Naive thymus-derived CD4-positive, alpha-beta T cell (primary cell): ENCODE measurements at regions of chr4 and their contacts with region 1.

Region 1: GRCh38 chr4:107736924-107737448 is 17.0 kb upstream of the PAPSS1 start:
- DNase-seq: peak in 7 of 9 donors; percentile 14 to 45 (median 33)
- ATAC-seq: peak; percentile 74
- H3K4me3 ChIP-seq: no peak overlapping the region
- H3K4me3 Mint-ChIP-seq: no peak overlapping the region
- H3K27ac ChIP-seq: no peak overlapping the region
- H3K27ac Mint-ChIP-seq: no peak overlapping the region
- H3K4me1 ChIP-seq: no peaks in the 10 kb centered on the region
- H3K4me1 Mint-ChIP-seq: no peaks in the 10 kb centered on the region
- H3K27me3 ChIP-seq: no peaks in the 10 kb centered on the region
- H3K27me3 Mint-ChIP-seq: peaks cover 0 to 6% (median 0%) of the 10 kb centered on the region in 5 donors

Region 2: DNA sequence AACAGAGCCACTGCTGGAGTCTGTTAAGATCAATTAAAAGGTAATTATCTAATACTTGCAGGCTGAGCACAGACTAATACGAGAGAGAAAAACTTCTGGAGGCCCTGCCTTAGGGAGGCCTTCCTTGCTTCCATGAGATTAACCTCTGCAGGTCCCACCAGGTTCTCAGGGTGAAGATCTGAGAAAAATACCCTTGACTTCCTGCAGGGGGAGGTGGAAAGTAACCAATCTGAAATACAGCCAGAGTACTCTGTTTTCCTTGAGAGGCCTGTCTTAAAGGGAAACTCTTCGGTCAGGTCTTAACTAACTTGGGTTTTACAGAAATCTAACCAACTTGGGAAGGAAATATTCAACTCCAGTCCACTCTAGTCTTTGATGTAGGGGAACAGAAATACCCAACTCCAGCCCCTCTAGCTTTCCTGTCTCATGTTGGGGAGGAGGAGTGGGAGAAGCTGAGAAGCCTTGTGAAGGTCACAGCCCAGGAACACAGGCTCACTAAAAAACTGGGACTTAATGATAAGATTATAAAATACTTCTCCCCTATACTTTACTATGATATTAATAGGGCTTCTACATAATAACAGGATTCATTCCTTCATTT is 1498.1 kb before region 1 on chr4:
- CTCF ChIA-PET with region 1: no interaction called
- POLR2A ChIA-PET with region 1: no interaction called
- intact Hi-C with region 1: loop called in 1 of 2 experiments (anchors 1 kb)
- DNase-seq: peak in 3 of 9 donors; percentile 1 to 16 (median 5)
- ATAC-seq: peak; percentile 51
- H3K4me3 ChIP-seq: no peak overlapping the region
- H3K4me3 Mint-ChIP-seq: no peak overlapping the region
- H3K27ac ChIP-seq: no peak overlapping the region
- H3K27ac Mint-ChIP-seq: no peak overlapping the region
- H3K4me1 ChIP-seq: no peaks in the 10 kb centered on the region
- H3K4me1 Mint-ChIP-seq: no peaks in the 10 kb centered on the region
- H3K27me3 ChIP-seq: no peaks in the 10 kb centered on the region
- H3K27me3 Mint-ChIP-seq: no peaks in the 10 kb centered on the region

Region 3: GRCh38 chr4:106266201-106266600 is 1470.8 kb before region 1 on chr4:
- CTCF ChIA-PET with region 1: no interaction called
- POLR2A ChIA-PET with region 1: no interaction called
- intact Hi-C with region 1: loop called in 1 of 2 experiments (anchors 2 kb)
- DNase-seq: peak in 4 of 9 donors; percentile 1 to 15 (median 8)
- ATAC-seq: no peak
- H3K4me3 ChIP-seq: no peak overlapping the region
- H3K4me3 Mint-ChIP-seq: no peak overlapping the region
- H3K27ac ChIP-seq: no peak overlapping the region
- H3K27ac Mint-ChIP-seq: no peak overlapping the region
- H3K4me1 ChIP-seq: no peaks in the 10 kb centered on the region
- H3K4me1 Mint-ChIP-seq: peaks cover 0 to 12% (median 0%) of the 10 kb centered on the region in 7 donors
- H3K27me3 ChIP-seq: no peaks in the 10 kb centered on the region
- H3K27me3 Mint-ChIP-seq: no peaks in the 10 kb centered on the region

Region 4: GRCh38 chr4:106329041-106329618 is 1407.9 kb before region 1 on chr4:
- CTCF ChIA-PET with region 1: no interaction called
- POLR2A ChIA-PET with region 1: no interaction called
- intact Hi-C with region 1: loop called in 1 of 2 experiments (anchors 5 kb)
- DNase-seq: peak in 3 of 9 donors; percentile 7 to 19 (median 18)
- ATAC-seq: peak; percentile 77
- H3K4me3 ChIP-seq: no peak overlapping the region
- H3K4me3 Mint-ChIP-seq: no peak overlapping the region
- H3K27ac ChIP-seq: no peak overlapping the region
- H3K27ac Mint-ChIP-seq: peak overlapping the region in 1 of 9 donors; percentile 52
- H3K4me1 ChIP-seq: no peaks in the 10 kb centered on the region
- H3K4me1 Mint-ChIP-seq: peaks cover 0 to 24% (median 13%) of the 10 kb centered on the region in 7 donors
- H3K27me3 ChIP-seq: no peaks in the 10 kb centered on the region
- H3K27me3 Mint-ChIP-seq: no peaks in the 10 kb centered on the region

Region 5: DNA sequence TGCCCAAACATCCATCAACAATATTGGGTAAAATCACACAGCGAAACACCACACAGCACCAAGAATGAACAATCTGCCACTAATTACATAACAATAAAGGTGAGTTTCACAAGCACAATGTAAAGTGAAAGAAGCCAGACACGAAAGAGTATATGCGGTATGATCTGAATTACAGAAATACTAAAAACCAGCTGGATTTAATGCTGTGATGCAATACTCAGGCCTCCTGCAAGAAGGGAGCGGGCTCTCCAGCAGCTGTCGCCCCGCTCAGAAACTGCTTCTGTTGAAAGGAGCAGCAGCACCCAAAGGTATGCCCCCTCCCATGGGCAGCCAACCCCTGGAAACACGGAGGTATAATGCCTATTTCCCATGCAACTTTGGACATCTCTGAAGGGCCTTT is 94.0 kb before region 1 on chr4:
- CTCF ChIA-PET with region 1: no interaction called
- POLR2A ChIA-PET with region 1: no interaction called
- intact Hi-C with region 1: loop called in 1 of 2 experiments (anchors 5 kb)
- DNase-seq: no peak
- ATAC-seq: no peak
- H3K4me3 ChIP-seq: no peak overlapping the region
- H3K4me3 Mint-ChIP-seq: no peak overlapping the region
- H3K27ac ChIP-seq: no peak overlapping the region
- H3K27ac Mint-ChIP-seq: no peak overlapping the region
- H3K4me1 ChIP-seq: no peaks in the 10 kb centered on the region
- H3K4me1 Mint-ChIP-seq: peaks cover 0 to 5% (median 0%) of the 10 kb centered on the region in 7 donors
- H3K27me3 ChIP-seq: no peaks in the 10 kb centered on the region
- H3K27me3 Mint-ChIP-seq: no peaks in the 10 kb centered on the region

Region 6: DNA sequence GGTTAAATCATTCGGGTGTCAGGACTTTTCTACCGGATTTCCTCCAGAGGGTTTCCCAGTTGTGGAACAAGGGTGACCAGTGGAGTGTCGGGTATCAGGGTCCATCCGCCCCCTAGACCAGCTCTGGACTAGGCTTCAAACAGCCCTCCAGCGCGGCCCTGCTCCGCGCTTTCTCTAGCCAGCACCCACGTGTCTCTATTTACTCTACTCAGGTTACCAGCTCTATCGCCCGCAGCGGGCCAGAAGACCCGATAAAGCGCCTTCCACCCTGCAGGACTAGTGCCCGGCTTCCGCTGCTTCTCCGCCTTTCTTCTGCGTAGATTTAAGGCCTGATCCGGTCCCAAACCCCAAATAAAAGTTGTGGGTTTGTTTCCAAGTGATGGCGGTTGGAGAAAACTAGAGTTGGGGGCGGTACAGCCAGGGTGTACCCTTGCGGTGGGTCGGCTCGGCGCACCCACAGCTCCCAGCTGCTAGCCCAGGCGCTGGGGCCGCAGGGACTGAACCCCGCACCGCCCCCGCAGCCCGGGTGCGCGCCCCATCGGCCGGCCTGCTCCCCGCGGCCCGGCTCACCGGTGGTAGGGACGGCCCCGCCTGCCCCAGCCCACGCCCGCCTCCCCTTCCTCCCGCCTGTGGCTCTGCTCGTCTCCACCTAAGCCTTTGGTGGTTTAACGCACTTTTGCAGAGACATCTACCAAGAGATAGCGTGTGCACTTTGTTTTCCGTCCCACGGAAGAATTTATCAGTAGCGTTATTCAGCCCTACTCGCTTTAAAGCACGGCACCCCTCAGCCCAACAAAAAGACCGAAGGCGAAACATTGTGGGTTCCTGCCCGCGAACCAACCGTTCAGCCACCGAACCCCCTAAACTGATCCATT is 429.7 kb after region 1 on chr4:
- CTCF ChIA-PET with region 1: no interaction called
- POLR2A ChIA-PET with region 1: no interaction called
- intact Hi-C with region 1: no loop called
- DNase-seq: peak; percentile 38 to 89 (median 70)
- ATAC-seq: peak; percentile 41
- H3K4me3 ChIP-seq: peak overlapping the region; percentile 77
- H3K4me3 Mint-ChIP-seq: peak overlapping the region; percentile 89 to 100 (median 98)
- H3K27ac ChIP-seq: peak overlapping the region; percentile 87
- H3K27ac Mint-ChIP-seq: peak overlapping the region; percentile 90 to 98 (median 97)
- H3K4me1 ChIP-seq: peaks cover 8 to 13% of the 10 kb centered on the region in 2 donors
- H3K4me1 Mint-ChIP-seq: peaks cover 13 to 46% (median 25%) of the 10 kb centered on the region in 7 donors
- H3K27me3 ChIP-seq: no peaks in the 10 kb centered on the region
- H3K27me3 Mint-ChIP-seq: peaks cover 0 to 33% (median 0%) of the 10 kb centered on the region in 5 donors

Region 7: DNA sequence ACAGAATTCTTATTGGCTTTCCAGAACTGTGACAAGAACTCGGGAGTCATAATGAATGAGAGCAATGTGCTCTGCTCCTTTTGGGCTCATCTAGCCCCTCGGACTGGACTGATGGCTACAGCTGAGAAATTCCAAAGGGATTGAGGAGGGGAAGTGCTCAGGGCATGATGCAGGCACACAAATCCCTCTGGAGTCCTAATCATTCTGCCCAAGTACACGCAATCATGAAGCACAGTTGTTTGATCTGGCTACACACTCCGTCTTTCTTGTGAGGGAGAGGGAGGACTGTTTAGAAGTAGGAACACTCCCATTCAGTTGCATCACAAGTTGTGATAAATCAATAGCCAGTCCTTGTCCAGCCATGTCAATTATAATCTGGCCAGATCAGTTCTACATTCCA is 1328.0 kb after region 1 on chr4:
- CTCF ChIA-PET with region 1: no interaction called
- POLR2A ChIA-PET with region 1: no interaction called
- intact Hi-C with region 1: no loop called
- DNase-seq: no peak
- ATAC-seq: no peak
- H3K4me3 ChIP-seq: no peak overlapping the region
- H3K4me3 Mint-ChIP-seq: no peak overlapping the region
- H3K27ac ChIP-seq: no peak overlapping the region
- H3K27ac Mint-ChIP-seq: no peak overlapping the region
- H3K4me1 ChIP-seq: no peaks in the 10 kb centered on the region
- H3K4me1 Mint-ChIP-seq: no peaks in the 10 kb centered on the region
- H3K27me3 ChIP-seq: no peaks in the 10 kb centered on the region
- H3K27me3 Mint-ChIP-seq: peaks cover 0 to 18% (median 7%) of the 10 kb centered on the region in 5 donors